ENCODE measurements at regions of chr1 and their contacts with region 1.

Region 1: DNA sequence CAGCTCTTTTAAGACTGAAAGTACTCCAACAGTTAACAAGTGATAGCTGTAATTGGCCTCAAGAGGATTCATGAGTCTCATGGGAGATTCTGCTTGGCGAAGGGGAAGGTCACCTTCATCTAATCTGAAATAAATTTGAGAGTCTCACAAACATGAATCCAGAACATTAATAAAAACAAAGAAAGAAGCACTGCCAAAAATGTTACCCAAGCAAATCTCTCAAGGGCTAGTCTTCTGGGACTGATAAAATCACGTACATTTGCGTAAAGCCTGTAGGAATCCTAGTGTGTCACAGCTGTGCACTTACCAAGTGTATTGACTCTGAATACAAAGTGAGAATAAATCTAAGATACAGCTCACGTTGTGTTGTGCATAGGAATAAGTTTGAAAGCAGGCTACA is 21.2 kb upstream of the NUF2 start:
- DNase-seq: no peak
- ATAC-seq: peak; percentile 39

Region 2: DNA sequence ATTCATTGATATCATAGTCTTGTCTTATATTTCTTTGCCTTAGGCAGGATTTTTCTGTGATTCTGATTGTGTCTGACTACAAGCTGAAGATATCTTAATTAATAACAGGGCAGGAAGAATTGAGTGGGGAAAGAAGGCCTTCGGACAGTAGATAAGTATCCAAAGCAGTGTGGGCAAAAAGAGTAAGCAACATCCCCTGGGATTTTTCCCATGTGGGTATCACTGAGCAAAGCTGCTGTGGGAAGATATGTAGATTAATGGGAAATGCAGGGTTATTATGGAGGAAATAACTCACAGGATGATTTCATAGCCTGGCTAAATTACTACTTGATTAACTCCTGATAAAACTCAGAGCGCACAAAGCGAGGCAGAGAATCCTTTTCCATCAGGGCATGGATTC is 153.5 kb before region 1 on chr1:
- intact Hi-C with region 1: no loop called
- DNase-seq: no peak
- ATAC-seq: no peak

Region 3: GRCh38 chr1:163195728-163196448 is 104.7 kb before region 1 on chr1:
- intact Hi-C with region 1: loop called (anchors 5 kb)
- DNase-seq: no peak
- ATAC-seq: no peak

Region 4: GRCh38 chr1:163213626-163214025 is 86.9 kb before region 1 on chr1:
- intact Hi-C with region 1: no loop called
- DNase-seq: no peak
- ATAC-seq: no peak

Region 5: DNA sequence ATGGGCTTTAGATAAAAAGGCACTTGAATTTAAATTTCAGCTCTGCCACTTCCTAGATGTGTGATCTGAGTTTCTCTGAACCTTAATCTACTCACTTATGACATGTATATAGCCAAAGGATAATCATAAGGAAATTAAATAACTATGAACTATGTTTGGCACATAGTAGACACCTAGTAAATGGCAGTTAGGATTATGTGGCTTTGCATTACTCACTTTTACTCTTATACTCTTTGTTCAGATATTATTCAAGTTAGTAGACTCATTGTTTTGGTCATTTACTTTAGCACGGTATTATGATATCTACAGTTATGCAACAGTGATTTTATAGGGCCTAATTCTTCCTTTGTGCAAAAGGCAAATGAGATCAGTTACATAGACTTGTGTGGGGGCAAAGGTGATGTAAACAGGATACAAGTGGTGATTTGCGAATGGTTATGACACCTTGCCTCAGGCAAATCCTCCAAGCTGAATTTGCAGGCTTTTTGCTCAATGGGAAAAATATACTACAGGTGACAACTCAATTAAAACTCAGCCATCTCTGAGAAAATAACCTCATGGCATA is 961.2 kb after region 1 on chr1:
- intact Hi-C with region 1: no loop called
- DNase-seq: no peak
- ATAC-seq: no peak